ENCODE measurements at regions of chr5 and their contacts with region 1.

Region 1: DNA sequence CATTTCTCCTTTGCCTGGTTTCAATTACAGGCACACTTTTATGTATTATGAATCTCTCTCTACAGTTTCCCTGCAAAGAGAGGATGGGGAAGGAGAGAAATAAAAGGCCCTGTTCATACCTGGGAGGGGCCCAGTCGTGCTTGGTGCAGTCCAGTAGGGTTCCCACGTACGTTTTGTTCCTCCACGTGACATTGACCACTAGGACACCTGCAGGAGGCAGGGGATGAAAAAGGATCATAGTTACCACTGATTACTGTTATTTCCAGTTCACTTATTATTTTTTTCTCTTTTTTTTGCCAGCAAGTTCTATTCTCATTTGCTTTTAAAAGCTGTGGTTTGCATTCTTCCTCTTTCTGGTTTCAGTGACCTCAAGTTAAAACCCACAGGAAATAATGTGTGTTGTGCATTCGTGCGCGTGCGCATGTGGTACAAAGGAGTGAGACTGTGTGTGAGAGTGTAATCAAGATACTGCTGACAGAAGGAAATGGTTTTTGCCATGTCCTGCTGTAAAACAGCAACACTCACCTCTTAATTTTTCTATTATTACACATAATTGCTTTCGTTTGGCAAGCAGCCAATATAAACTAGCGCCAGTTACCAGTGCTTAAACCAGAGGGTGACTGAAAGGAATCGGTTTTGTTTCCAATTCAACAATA is 96.8 kb downstream of the ZNF608 start:
- DNase-seq: peak; percentile 29 to 91 (median 75)
- ATAC-seq: peak; percentile 92
- H3K4me3 ChIP-seq: no peak overlapping the region
- H3K4me3 Mint-ChIP-seq: peak overlapping the region in 9 of 10 donors; percentile 6 to 84 (median 66)
- H3K27ac ChIP-seq: no peak overlapping the region
- H3K27ac Mint-ChIP-seq: peak overlapping the region in 8 of 9 donors; percentile 19 to 94 (median 78)
- H3K4me1 ChIP-seq: peaks cover 4 to 21% of the 10 kb centered on the region in 2 donors
- H3K4me1 Mint-ChIP-seq: peaks cover 14 to 47% (median 34%) of the 10 kb centered on the region in 7 donors
- H3K27me3 ChIP-seq: peaks cover 0 to 14% of the 10 kb centered on the region in 2 donors
- H3K27me3 Mint-ChIP-seq: peaks cover 11 to 48% (median 34%) of the 10 kb centered on the region in 5 donors

Region 2: GRCh38 chr5:124583469-124584350 is 65.9 kb before region 1 on chr5:
- CTCF ChIA-PET with region 1: no interaction called
- POLR2A ChIA-PET with region 1: no interaction called
- intact Hi-C with region 1: loop called in 1 of 2 experiments (anchors 5 kb)
- DNase-seq: peak in 1 of 9 donors; percentile 8
- ATAC-seq: peak; percentile 80
- H3K4me3 ChIP-seq: no peak overlapping the region
- H3K4me3 Mint-ChIP-seq: peak overlapping the region in 5 of 10 donors; percentile 2 to 37 (median 15)
- H3K27ac ChIP-seq: no peak overlapping the region
- H3K27ac Mint-ChIP-seq: no peak overlapping the region
- H3K4me1 ChIP-seq: no peaks in the 10 kb centered on the region
- H3K4me1 Mint-ChIP-seq: peaks cover 5 to 14% (median 10%) of the 10 kb centered on the region in 7 donors
- H3K27me3 ChIP-seq: no peaks in the 10 kb centered on the region
- H3K27me3 Mint-ChIP-seq: peaks cover 0 to under 1% (median 0%) of the 10 kb centered on the region in 5 donors

Region 3: GRCh38 chr5:124748687-124749594 is 99.3 kb after region 1 on chr5:
- CTCF ChIA-PET with region 1: no interaction called
- POLR2A ChIA-PET with region 1: no interaction called
- intact Hi-C with region 1: loop called in 1 of 2 experiments (anchors 10 kb)
- DNase-seq: no peak
- ATAC-seq: peak; percentile 73
- H3K4me3 ChIP-seq: no peak overlapping the region
- H3K4me3 Mint-ChIP-seq: peak overlapping the region in 9 of 10 donors; percentile 25 to 70 (median 61)
- H3K27ac ChIP-seq: no peak overlapping the region
- H3K27ac Mint-ChIP-seq: no peak overlapping the region
- H3K4me1 ChIP-seq: peaks cover 0 to 6% of the 10 kb centered on the region in 2 donors
- H3K4me1 Mint-ChIP-seq: peaks cover 0 to 36% (median 34%) of the 10 kb centered on the region in 7 donors
- H3K27me3 ChIP-seq: peaks cover 0 to 19% of the 10 kb centered on the region in 2 donors
- H3K27me3 Mint-ChIP-seq: peaks cover 13 to 59% (median 22%) of the 10 kb centered on the region in 5 donors

Measured in naive thymus-derived CD4-positive, alpha-beta T cell (primary cell).